ENCODE measurements at regions of chr15 and their contacts with region 1.

Region 1: DNA sequence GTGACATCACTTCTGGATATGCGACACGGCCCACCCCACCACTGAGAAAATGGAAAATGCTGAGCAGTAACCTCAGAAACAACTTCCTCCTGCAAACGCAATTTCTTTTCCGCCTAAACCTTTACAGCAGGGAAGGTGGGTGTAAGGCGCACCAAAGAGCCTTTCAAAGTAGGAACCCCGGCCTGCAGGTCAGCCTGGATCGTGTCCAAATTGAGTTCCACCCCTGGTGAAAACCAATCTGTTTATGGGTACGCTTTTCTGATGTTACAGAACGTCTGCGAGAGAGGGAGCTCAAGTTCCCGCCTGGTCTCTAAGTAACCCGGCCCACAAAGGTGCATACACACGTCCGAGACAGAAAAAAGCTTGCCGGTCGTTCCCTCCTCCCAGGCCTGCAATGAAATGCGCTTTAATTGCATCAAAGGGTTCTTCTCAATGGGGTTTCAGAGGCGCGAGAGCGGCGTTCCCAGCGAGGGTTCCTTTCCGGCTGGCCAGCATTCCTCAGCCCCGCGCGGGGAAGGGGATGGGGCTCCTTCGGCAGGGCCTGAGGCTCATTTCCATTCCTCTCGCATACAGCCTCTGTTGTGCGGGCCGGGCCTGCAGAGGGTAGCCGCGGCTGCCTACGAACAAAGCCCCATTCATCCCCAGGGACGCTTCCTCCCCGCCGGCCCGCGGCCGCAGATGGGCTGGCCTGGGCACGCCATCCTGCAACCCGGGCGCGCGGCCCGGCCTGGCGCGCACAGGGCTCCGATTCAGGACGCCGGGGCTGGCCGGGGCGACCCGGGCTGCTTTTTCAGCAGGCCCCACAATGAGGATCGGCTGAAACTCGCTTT is 138.1 kb downstream of the TMCO5A start:
- DNase-seq: peak; percentile 83 to 98 (median 93)

Region 2: GRCh38 chr15:37743826-37744225 is 328.7 kb before region 1 on chr15:
- intact Hi-C with region 1: no loop called
- DNase-seq: no peak

Region 3: DNA sequence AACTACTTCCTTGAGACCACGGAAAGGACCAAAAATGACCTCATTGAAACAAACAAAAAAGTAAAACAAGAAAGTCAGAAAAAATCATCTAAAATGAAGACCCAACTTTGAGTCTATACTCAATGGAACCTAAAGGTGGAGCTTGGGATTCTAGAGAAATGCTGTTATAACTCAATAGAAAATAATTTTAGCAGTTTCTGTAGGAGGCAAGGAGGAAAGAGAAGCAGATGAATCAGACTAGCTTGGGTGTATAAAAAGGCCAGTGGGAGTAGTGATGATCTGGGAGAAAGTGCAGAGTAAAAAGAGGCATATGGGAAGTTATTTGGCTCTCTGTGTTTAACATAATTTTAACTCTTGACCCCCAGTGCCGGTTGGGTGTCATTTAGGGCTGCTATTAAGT is 43.7 kb before region 1 on chr15:
- intact Hi-C with region 1: no loop called
- DNase-seq: peak in 2 of 42 donors; percentile 17 to 48

Region 4: GRCh38 chr15:38129531-38130204 is 57.1 kb after region 1 on chr15:
- intact Hi-C with region 1: loop called (anchors 5 kb)
- DNase-seq: peak; percentile 26 to 92 (median 67)